ENCODE measurements at regions of chr5 and their contacts with region 1.

Region 1: DNA sequence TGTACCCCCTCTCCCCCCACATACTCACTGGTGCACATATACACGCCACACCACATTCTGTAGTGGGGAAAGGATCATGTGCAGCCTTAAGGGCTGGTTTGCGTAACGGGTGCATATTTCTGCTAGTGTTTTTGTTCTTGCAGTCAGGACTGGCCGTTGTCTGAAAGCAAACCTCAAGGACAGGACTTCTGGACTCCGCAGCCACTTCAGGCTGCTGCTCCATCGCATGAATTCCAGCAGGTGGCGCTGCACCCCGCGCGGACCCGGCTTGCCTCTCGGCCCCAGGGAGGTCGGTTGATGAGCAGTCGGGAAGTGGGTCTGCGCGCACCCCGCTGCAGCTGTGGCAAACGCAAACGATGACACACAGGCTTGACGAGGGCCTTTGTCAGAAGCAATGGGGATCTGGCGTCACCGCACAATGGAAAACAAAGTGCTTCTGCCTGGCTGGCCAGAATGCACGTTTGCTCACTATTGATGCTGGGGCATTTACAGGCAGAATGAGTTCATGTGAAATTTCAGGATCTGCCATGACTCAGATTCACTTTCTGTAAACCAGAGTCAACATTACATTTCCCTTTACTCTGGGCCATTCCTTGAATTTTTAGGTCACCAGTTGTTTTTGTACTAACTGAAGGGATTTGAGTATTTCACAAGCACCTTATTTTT is 36.3 kb upstream of the GLRX start:
- DNase-seq: peak; percentile 82 to 96
- H3K4me3 ChIP-seq: peak overlapping the region in 2 of 4 experiments; percentile 7 to 32; a peak in 1 of 8 replicates
- H3K27ac ChIP-seq: no peak overlapping the region
- H3K4me1 ChIP-seq: no peaks in the 10 kb centered on the region; a peak in 2 of 7 replicates
- H3K27me3 ChIP-seq: no peaks in the 10 kb centered on the region; a peak in 1 of 7 replicates
- CTCF ChIP-seq: peak; percentile 89 to 97 (median 94)
- EP300 ChIP-seq: peak in 1 of 2 experiments; percentile 39; a peak in 1 of 3 replicates
- POLR2A ChIP-seq: no peak
- RAD21 ChIP-seq: peak; percentile 99

Region 2: DNA sequence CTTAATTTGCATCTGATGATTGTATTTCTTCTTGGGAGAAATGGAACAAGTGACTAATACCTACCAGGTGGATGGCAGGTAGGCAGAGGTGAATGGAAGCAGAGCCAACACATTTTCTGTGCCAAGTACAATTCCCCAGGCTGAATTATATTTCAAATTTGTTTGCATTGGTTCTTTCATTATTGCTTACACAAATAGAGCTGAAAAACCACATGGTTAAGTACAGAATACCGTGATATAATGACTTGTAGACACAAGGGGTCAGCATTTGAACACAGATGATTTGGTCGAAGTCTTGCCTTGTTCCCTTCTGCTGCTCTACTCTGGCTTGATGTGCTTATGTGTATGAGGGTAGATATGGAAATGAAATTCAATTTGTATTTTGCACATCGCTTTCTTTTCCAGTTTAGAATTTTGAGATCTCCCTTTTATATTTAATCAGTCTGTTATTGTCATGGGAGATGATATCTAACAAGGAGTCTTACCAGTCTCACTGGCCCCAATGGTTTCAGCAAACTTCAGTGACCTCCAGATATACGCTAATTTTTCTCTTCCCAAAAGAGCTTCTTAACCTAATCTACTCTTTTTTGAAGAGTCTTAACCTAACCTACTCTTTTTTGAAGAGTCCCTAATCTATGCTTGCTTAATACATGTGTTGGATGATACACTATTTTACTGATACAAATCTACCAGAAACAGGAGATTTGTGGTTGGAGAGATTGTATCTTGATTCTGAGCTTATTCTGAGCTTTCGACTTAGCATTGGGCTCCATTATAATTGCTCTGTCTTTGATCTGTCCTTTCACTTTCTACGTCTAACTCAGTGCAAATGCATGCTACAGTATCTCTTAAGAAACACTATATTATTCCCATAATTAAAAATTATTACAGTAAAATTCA is 486.1 kb after region 1 on chr5:
- CTCF ChIA-PET with region 1: interaction called, 43 read pairs
- POLR2A ChIA-PET with region 1: no interaction called
- DNase-seq: no peak
- H3K4me3 ChIP-seq: no peak overlapping the region
- H3K27ac ChIP-seq: no peak overlapping the region
- H3K4me1 ChIP-seq: no peaks in the 10 kb centered on the region
- H3K27me3 ChIP-seq: no peaks in the 10 kb centered on the region
- CTCF ChIP-seq: peak in 2 of 3 experiments; percentile 66 to 72; a peak in 3 of 4 replicates
- EP300 ChIP-seq: no peak
- POLR2A ChIP-seq: no peak
- RAD21 ChIP-seq: peak; percentile 91 to 94